Aorta (tissue), 5 donors: ENCODE measurements at regions of chrX and their contacts with region 1.

Region 1: DNA sequence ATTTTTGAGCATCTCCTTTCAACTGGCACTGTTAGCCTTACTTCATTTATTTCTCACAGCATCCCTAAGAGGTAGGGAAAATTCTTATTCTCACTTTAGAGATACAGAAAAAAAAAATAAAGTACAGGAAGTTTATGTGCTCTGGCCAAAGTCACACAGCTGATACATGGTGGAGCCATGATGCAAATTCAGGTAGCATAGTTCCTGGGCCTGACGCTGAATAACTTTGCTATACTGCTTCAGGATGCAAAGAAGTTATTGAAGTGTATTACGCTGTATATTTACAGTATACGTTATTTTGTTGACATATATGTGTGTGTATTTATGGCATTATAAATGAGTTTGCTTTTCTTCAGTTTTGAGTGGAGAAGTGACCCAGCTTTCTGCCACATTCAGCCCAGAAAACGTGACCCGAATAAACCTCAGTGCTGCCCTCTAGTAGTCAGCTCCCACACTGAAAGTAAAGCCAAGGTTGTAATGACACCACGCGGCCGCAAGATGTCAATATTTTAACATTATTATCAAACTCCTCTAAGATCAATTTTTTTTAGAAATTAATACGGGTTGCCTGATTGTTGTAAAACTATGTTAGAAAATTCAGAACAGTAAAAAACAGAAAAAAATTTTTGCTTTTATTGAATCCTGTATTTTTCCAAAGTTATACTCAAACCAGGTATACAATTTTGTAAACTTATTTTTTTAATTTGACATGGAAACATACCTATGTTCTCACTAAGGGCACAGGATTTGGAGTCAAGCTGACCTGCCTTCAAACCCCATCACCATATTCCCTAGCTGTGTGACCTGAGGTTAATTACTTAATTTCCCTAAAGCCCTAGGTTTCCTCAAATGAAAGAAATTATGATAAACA is 3.8 kb upstream of the GUCY2F start:
- DNase-seq: peak; percentile 54 to 73
- ATAC-seq: peak; percentile 82
- H3K4me3 ChIP-seq: no peak overlapping the region
- H3K27ac ChIP-seq: no peak overlapping the region
- H3K4me1 ChIP-seq: no peaks in the 10 kb centered on the region
- H3K27me3 ChIP-seq: no peaks in the 10 kb centered on the region

Region 2: GRCh38 chrX:108049649-108050048 is 1436.1 kb before region 1 on chrX:
- intact Hi-C with region 1: no loop called
- DNase-seq: no peak
- ATAC-seq: no peak
- H3K4me3 ChIP-seq: no peak overlapping the region
- H3K27ac ChIP-seq: no peak overlapping the region
- H3K4me1 ChIP-seq: no peaks in the 10 kb centered on the region
- H3K27me3 ChIP-seq: no peaks in the 10 kb centered on the region

Region 3: DNA sequence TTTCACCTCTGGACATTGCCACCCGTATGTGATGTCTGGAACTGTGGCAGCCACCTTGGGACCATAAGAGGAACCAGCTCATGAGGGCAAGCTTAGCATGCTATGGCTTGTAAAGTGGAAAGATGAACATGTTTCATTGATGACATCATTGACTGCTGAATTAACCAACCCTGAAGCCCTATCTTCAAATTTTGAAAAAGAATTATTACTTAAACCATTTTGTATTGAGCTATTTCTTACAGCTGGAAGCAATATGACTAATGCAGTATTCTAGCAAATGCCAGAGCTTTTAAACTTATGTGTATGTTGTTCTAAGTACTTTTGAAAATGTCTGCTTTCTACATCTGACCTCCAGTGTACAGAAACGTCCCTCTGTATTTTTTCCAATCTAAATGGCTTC is 21.9 kb before region 1 on chrX:
- intact Hi-C with region 1: no loop called
- DNase-seq: no peak
- ATAC-seq: no peak
- H3K4me3 ChIP-seq: no peak overlapping the region
- H3K27ac ChIP-seq: no peak overlapping the region
- H3K4me1 ChIP-seq: no peaks in the 10 kb centered on the region
- H3K27me3 ChIP-seq: no peaks in the 10 kb centered on the region

Region 4: GRCh38 chrX:109624641-109625616 is 139.2 kb after region 1 on chrX and contains the start of gene KCNE5:
- intact Hi-C with region 1: loop called (anchors 5 kb)
- DNase-seq: peak; percentile 47 to 78
- ATAC-seq: peak; percentile 37
- H3K4me3 ChIP-seq: no peak within 1 kb of the TSS
- H3K27ac ChIP-seq: no peak within 1 kb of the TSS
- H3K4me1 ChIP-seq: no peaks in the 10 kb centered on the region
- H3K27me3 ChIP-seq: no peaks in the 10 kb centered on the region
- total RNA-seq, gene KCNE5: 0.24 to 0.39 TPM

Region 5: DNA sequence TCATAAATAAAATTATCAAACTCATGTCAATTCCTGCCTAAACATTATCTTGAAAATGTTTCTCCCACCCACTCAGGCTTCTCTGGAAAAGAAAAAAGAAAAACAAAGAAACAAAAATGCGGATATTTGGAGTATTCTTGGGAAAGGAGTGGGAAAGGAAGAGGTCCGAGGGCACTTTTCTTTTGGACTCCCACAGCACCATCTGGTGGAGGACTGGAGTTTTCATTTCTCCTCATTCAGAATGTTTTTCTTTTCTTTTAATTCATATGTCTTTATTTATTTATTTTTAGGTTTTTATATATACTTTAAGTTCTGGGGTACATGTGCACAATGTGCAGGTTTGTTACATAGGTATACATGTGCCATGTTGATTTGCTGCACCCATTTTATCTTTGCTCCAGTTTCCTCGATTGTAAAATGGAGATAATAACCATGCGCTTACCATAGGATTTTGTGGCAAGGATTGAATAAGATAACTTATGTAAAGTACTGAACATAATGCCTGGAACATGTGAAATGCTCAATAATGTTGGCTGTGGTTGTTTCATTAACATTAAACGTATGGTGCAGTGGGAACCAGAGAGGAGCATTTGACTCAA is 147.3 kb after region 1 on chrX:
- intact Hi-C with region 1: loop called (anchors 5 kb)
- DNase-seq: no peak
- ATAC-seq: no peak
- H3K4me3 ChIP-seq: no peak overlapping the region
- H3K27ac ChIP-seq: no peak overlapping the region
- H3K4me1 ChIP-seq: no peaks in the 10 kb centered on the region
- H3K27me3 ChIP-seq: no peaks in the 10 kb centered on the region

Region 6: GRCh38 chrX:109886122-109886761 is 400.5 kb after region 1 on chrX:
- intact Hi-C with region 1: loop called (anchors 5 to 10 kb)
- DNase-seq: no peak
- ATAC-seq: no peak
- H3K4me3 ChIP-seq: no peak overlapping the region
- H3K27ac ChIP-seq: no peak overlapping the region
- H3K4me1 ChIP-seq: no peaks in the 10 kb centered on the region
- H3K27me3 ChIP-seq: peaks cover 0 to 1% of the 10 kb centered on the region in 2 donors